GM10248 (cell line): ENCODE measurements at regions of chr7 and their contacts with region 1.

Region 1: DNA sequence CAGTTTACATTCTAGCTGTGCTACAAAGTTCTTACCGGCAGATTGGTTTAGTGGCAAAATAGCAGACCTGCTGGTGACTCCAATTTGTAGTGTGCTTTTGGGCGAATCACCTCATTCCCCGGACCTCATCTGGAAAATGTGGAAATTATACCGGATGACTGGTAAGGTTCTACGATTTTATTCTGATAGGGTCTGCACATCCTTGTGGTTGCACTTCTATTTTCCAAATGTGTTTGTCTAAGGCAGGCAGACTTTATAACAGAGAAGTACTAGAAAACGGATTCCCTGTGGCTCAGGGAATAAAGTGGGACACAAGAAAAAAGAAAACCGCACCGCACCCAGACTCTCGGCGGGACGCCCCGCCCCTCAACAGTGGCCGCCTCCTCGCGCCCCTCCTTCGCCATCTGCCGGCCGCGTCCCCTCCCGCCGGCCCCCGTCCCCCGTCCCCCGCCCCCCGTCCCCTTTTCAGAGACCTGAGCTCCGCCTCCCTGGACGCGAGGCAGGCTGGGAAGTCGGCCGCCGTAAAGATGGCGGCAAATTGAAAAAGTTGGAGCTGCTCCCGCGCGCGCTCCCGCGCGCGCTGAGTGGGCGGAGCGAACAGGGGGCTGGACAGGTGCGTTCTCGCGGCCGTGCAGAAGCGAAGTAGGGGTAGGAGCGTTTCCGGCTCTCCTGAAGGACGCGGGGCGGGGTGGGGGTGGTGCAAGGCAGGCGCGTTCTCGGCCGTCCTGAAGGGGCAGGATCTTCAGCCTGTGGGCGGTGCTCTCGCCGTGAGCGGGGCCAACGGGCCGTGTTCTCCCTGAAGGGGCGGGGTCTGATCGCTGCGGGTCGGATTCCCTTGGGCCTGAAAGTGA is 531 bp upstream of the CCM2 start:
- DNase-seq: peak; percentile 94
- CTCF ChIP-seq: no peak

Region 2: DNA sequence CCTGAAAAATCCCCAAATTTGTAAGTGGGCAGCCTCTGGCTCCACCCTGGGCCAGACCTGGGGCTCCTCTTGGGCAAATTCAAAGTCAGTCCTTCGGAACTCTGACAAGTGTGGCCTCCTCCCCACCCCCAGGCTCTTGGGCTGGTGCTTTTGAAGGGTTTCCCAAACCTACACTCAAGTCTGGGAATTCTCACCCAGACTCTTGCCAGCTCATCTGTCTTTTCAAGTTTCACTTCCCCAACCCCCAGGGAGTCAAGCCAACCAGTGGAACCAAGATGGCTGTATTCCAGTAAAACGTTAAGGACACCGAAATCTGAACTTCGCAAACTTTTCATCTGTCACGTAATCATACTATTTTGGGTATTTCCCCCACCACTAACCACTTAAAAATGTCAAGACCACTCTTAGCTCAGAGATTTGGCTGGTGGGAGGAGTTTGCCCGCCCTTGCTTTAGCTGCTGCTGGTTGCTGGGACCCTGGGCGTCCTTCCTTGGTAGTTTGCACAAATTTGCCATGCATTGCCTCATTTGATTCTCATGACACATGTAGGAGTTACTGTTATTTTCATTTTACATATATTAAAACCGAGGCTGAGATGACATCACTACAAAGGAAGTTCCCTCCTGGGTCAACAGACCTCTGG is 19.0 kb before region 1 on chr7:
- CTCF ChIA-PET with region 1: interaction called, 7 read pairs
- POLR2A ChIA-PET with region 1: interaction called, 13 read pairs
- DNase-seq: peak; percentile 66
- CTCF ChIP-seq: no peak

Region 3: DNA sequence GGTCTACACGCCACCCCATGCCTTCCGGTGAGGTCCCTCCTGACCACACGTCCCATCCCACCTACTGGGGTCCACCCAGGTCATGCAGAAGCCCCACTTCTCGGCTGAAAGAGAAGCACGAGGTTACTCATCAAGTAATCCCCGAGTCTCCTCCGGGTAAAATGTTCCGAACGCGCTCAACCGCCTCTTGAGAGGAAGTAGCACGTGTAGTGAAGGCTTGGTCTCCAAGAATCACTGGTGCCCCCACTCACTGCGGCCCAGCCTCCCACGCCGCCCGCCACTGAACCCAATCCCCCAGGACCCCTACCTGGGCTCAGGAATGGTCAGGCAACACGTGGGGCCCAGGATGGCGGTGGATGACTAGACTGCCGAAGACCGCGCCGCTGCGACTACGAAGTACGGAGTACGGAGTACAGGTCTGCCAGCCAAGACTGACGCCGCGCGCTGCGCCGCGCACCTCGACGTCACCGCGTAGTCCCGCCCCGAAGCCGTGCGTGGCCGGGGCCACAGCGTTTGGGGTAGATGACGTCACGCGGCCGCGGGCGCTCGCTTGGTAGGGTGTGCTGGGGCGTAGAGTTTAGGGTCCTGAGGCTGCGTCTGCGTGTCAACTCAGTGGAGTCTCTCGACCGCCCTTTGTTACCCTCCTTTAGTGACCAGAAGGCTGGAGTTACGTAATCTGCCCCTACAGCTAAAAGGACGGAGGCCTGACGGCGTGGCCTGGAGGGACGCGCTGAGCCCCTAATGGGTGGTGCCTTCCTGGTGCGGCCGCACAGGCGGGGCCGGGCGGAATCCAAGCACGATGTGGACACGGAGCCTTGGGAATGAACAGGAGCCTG is 13.0 kb before region 1 on chr7:
- CTCF ChIA-PET with region 1: interaction called, 18 read pairs
- POLR2A ChIA-PET with region 1: interaction called, 13 read pairs
- DNase-seq: peak; percentile 89
- CTCF ChIP-seq: no peak

Region 4: DNA sequence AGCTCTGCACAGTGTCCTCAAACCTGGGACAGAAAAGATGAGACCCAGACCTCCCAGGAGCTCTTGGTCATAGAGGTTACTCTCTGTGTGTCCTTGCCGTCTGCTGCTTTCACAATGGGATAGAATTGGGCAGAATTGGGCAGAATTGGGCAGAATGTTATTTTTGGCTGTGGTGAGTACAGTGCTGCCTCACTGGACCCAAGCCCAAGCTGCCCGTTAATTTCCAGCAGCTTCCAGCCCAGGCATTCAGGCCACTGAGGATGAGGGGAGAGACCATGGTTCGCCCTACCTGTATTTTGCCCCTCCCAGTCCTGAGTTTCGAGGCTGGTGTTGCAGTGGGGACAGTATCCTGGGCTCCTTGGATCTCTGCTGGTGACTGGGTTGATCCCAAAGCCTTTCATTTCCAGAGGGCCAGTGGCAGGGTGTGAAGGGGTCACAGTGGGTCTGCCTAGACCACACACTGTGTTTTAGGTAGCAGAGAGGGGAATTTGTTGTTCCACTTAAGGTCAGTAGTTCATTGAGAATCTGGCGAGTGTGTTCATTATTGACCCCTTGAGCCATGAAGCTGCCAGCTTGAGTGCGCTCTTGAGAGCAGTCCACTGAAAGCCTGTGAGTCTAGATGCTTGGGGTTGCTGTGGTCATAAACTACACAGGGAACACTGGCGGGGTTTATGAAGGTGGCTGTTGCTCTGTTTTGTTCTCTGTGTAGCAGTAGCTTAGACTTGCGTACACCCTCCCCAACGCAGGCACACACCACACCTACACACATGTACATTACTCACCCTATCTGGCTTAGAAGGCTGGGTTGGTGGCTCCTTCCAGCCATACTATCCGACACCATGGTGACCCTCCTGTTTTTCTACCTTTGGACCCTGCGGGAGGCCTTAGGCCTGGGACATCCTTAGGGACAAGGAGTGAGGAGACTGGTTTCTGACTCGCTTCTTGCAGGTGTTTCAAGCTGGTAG is 65.8 kb after region 1 on chr7:
- CTCF ChIA-PET with region 1: no interaction called
- POLR2A ChIA-PET with region 1: no interaction called
- DNase-seq: no peak
- CTCF ChIP-seq: no peak